HEK293 (cell line): ENCODE measurements at regions of chr6 and their contacts with region 1.

Region 1: DNA sequence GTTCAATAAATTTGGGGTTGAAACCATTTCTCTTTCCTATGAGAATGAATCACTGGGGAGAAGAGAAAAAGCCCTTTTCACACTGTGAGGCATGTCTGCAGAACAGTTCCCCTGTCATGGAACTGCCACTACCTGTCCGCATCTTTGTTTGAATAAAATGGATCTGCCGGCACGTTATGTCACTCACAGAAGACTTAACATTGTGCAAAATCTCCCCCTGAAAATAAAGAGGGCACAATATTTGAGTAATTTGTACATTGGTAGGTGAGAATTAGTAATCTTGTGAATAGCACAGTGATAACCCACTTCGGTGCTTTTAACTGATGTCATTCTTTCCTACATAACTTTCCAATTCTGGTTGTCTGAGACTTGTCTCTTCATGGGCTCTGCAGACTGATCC is 804.0 kb downstream of the C6orf118 start:
- H3K4me3 ChIP-seq: no peak overlapping the region
- H3K27ac ChIP-seq: no peak overlapping the region
- H3K4me1 ChIP-seq: no peaks in the 10 kb centered on the region
- CTCF ChIP-seq: no peak

Region 2: DNA sequence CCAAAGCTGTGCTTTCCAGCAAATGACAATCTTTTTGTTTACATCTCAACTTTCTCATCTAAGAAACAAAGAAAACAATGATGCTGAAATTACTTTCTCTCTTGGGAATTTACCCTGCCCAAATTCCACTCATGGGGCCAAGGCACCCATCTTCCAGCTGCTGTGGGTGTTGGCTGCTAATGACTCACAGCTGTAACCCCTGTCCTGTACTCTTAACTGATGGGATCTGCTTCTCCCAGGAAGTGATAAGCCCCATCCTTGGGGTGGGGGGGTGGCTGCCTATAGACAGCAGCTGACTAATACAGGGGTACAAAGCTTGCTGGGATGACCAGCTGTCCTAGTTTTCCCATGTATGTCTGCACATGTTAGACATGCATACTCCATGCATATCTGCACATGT is 134.7 kb before region 1 on chr6:
- CTCF ChIA-PET with region 1: no interaction called
- POLR2A ChIA-PET with region 1: no interaction called
- H3K4me3 ChIP-seq: no peak overlapping the region
- H3K27ac ChIP-seq: no peak overlapping the region
- H3K4me1 ChIP-seq: no peaks in the 10 kb centered on the region
- CTCF ChIP-seq: no peak

Region 3: DNA sequence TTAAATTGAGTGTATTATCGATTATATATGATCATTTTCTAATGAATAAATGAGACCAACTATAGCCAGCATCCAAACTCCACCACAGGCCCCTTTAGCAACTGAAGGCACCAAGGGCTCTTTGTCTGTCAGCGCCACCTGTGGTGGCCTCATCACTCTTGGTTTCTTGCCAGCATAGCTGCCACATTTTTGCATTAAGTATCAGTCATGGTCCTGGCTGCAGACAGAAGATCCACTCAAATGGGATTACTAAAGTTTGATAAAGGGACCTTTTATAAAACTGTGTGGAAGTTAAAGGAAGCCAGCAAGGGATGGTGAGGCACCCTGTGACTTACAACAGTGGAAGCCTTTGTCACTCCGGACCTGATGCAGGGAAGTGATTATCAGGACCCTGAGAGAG is 641.0 kb after region 1 on chr6:
- CTCF ChIA-PET with region 1: no interaction called
- POLR2A ChIA-PET with region 1: no interaction called
- H3K4me3 ChIP-seq: no peak overlapping the region
- H3K27ac ChIP-seq: no peak overlapping the region
- H3K4me1 ChIP-seq: no peaks in the 10 kb centered on the region
- CTCF ChIP-seq: no peak

Region 4: GRCh38 chr6:165389534-165389933 is 884.1 kb after region 1 on chr6:
- CTCF ChIA-PET with region 1: no interaction called
- POLR2A ChIA-PET with region 1: interaction called, 11 read pairs
- H3K4me3 ChIP-seq: no peak overlapping the region
- H3K27ac ChIP-seq: no peak overlapping the region
- H3K4me1 ChIP-seq: no peaks in the 10 kb centered on the region
- CTCF ChIP-seq: no peak